Mammary epithelial cell (primary cell): ENCODE measurements at regions of chr6 and their contacts with region 1.

Region 1: DNA sequence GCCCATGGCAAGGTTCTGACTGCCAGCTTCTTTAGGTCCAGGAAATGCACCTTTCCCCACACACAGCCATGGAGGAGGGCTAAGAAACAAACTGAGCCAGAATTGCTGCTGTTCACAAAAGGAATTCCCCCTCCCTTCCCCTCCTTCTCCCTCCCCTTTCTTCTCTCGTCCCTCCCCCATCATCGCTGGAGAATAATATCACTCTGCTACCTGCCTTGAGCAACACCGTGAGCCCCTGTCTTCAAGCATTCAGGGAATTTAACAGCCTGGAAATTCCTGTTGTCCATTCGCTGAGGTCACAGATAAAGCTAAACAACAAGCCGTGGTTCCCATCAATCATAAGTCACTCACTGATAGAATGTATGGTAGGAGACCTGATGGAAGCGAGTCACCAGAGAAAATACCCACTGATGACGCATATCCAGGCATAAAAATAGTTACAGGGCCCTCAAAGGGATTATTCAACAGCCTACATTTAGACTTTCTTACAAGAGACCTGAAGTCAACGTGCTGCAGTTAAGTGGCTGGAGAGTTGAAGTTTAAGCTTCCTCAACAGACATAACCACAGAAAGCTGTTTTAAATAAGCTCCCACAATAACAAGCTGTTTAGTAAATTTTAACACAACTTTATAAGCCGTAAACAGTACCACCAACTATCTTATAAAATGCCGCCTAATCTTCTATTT is 59.7 kb downstream of the HIVEP2 start:
- DNase-seq: peak; percentile 99
- H3K4me3 ChIP-seq: peak overlapping the region; percentile 7 to 37 (median 29)
- H3K27ac ChIP-seq: peak overlapping the region; percentile 86
- H3K4me1 ChIP-seq: peaks cover 25% of the 10 kb centered on the region
- H3K27me3 ChIP-seq: no peaks in the 10 kb centered on the region
- CTCF ChIP-seq: no peak

Region 2: GRCh38 chr6:142566628-142567396 is 318.5 kb before region 1 on chr6:
- CTCF ChIA-PET with region 1: no interaction called
- dilution Hi-C with region 1: no loop called
- in situ Hi-C with region 1: no loop called
- intact Hi-C with region 1: loop called (anchors 10 kb)
- DNase-seq: peak; percentile 52
- H3K4me3 ChIP-seq: no peak overlapping the region
- H3K27ac ChIP-seq: no peak overlapping the region
- H3K4me1 ChIP-seq: peaks cover 35% of the 10 kb centered on the region
- H3K27me3 ChIP-seq: no peaks in the 10 kb centered on the region
- CTCF ChIP-seq: peak; percentile 95 to 99

Region 3: GRCh38 chr6:142756215-142756634 is 129.1 kb before region 1 on chr6:
- CTCF ChIA-PET with region 1: no interaction called
- dilution Hi-C with region 1: no loop called
- in situ Hi-C with region 1: no loop called
- intact Hi-C with region 1: loop called (anchors 5 kb)
- DNase-seq: peak; percentile 83
- H3K4me3 ChIP-seq: no peak overlapping the region
- H3K27ac ChIP-seq: peak overlapping the region; percentile 57
- H3K4me1 ChIP-seq: peaks cover 17% of the 10 kb centered on the region
- H3K27me3 ChIP-seq: no peaks in the 10 kb centered on the region
- CTCF ChIP-seq: peak in 1 of 2 donors; percentile 28

Region 4: DNA sequence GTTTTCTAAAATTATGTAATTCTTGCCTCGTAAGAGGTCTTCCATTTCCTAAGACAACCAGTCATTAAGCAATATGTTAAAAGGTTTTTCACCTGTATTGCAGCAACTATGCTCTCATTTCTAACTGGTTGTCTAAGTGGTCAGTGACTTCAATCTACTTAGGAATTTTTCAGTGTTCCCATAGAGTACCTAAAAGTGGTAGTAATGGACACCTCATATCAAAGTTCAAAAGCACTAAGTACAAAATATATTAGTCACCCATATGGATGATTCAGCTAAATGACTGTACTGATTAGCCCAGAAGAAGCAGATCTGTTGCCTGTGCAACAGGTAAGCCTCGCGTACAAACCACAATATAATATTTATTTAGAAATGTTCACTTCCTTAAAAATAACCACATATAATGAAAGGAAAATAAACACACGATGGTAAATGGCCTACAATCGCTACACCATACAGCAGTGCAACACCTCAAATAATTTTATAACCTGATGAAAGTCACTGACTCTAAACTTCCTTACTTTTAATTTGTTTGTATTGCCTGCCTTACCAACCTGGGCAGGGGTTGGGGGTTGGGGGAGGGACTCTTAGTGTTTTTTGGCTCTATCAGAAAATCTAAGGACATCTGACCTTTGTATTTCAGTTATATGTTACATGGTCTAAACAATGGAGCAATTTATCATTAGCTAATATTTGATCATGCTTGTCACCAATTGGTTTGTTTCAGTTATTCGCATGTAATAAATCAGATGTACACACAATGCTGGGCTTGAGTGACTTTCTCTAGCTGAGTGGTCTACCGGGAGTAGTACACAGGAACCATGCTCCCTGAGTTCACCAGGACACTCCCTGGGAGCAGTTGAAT is 46.3 kb before region 1 on chr6:
- CTCF ChIA-PET with region 1: no interaction called
- dilution Hi-C with region 1: no loop called
- in situ Hi-C with region 1: no loop called
- intact Hi-C with region 1: loop called (anchors 1 kb)
- DNase-seq: peak; percentile 93
- H3K4me3 ChIP-seq: peak overlapping the region in 2 of 3 experiments; percentile 23 to 34
- H3K27ac ChIP-seq: peak overlapping the region; percentile 90
- H3K4me1 ChIP-seq: peaks cover 33% of the 10 kb centered on the region
- H3K27me3 ChIP-seq: no peaks in the 10 kb centered on the region
- CTCF ChIP-seq: no peak

Region 5: GRCh38 chr6:142871910-142872331 is 13.4 kb before region 1 on chr6:
- CTCF ChIA-PET with region 1: interaction called, 10 read pairs
- dilution Hi-C with region 1: no loop called
- in situ Hi-C with region 1: no loop called
- intact Hi-C with region 1: no loop called
- DNase-seq: peak; percentile 97
- H3K4me3 ChIP-seq: no peak overlapping the region
- H3K27ac ChIP-seq: peak overlapping the region; percentile 94
- H3K4me1 ChIP-seq: peaks cover 29% of the 10 kb centered on the region
- H3K27me3 ChIP-seq: no peaks in the 10 kb centered on the region
- CTCF ChIP-seq: no peak

Region 6: DNA sequence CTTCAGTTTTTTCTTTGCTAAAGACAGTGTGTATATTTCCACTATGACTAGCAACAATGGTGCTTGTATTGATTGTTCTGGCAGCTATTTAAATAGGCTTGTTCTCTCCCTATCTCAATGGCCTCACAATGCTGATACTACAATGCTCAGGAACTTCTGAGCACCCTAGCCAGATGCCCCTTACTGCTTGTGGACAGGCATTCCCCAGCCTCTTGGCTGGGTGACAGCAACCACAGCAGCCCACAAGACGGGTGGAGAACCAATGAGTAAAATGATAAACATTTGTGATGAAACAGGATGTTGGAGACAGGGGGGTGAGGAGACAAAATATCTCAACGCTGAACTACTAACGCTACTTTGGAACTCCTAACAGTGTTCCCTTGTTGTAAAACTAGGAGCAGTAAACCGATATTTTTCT is 17.3 kb after region 1 on chr6:
- CTCF ChIA-PET with region 1: no interaction called
- dilution Hi-C with region 1: no loop called
- in situ Hi-C with region 1: no loop called
- intact Hi-C with region 1: loop called (anchors 1 kb)
- DNase-seq: peak; percentile 97
- H3K4me3 ChIP-seq: peak overlapping the region in 1 of 3 experiments; percentile 32
- H3K27ac ChIP-seq: peak overlapping the region; percentile 97
- H3K4me1 ChIP-seq: peaks cover 32% of the 10 kb centered on the region
- H3K27me3 ChIP-seq: no peaks in the 10 kb centered on the region
- CTCF ChIP-seq: no peak